SK-N-SH (cell line): ENCODE measurements at regions of chr7 and their contacts with region 1.

Region 1: DNA sequence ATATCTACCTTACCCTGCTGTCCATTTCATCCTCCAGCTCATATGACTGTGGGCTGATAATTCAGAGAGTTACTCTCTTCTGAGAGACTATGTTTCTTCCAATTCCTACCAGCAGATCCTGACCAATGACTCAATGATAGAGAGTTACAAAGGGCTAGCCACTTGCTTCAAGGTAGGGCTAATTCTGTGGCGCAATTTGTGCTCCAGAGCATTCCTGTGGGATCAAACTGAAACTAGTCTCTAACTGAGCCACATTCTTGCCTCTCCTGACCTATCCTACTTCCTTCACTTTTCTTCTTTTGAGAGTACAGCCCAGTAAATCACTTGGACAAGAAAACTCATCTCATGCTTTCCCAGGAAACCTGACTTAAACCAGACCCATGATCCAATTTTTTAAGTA is 17.9 kb upstream of the ASZ1 start:
- DNase-seq: no peak
- H3K4me3 ChIP-seq: no peak overlapping the region
- H3K27ac ChIP-seq: no peak overlapping the region
- H3K4me1 ChIP-seq: no peaks in the 10 kb centered on the region
- H3K27me3 ChIP-seq: no peaks in the 10 kb centered on the region
- CTCF ChIP-seq: no peak
- EP300 ChIP-seq: no peak
- RAD21 ChIP-seq: no peak

Region 2: DNA sequence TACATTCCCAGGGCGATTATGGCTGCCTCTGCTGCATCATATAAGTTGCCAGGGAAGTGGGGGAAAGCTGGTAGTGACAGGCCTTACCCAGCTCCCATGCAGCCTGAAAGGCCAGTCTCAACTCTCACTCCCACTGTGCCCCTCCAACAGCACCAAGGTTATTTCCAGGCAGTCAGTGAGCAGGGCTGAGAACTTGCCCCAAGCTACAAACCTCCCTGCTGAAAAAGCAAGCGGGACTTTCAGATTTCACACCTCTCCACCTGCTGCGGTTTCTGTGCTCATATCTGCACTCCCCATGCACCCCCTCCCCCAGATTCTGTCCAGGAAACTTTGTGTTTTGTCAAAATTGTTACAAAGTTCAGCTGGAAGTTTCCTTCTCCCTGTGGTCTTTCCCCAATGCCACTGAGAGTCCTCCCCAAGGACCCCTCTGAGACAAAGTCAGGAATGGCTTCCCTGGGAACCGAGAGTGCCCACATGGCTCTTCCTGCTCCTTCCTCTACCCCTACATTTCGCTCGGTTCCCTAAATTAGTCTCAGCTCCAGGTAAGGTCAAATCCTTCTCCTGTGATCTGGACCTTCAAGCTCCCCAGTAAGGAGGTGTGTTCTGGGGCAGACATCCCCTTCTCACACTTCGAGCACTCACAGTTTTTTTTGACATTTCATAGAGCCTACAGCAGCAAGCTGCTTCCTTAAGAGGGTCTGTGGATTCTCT is 97.1 kb before region 1 on chr7:
- CTCF ChIA-PET with region 1: no interaction called
- POLR2A ChIA-PET with region 1: no interaction called
- DNase-seq: no peak
- H3K4me3 ChIP-seq: no peak overlapping the region
- H3K27ac ChIP-seq: no peak overlapping the region
- H3K4me1 ChIP-seq: no peaks in the 10 kb centered on the region
- H3K27me3 ChIP-seq: peaks cover 18% of the 10 kb centered on the region
- CTCF ChIP-seq: no peak
- EP300 ChIP-seq: no peak
- RAD21 ChIP-seq: no peak

Region 3: DNA sequence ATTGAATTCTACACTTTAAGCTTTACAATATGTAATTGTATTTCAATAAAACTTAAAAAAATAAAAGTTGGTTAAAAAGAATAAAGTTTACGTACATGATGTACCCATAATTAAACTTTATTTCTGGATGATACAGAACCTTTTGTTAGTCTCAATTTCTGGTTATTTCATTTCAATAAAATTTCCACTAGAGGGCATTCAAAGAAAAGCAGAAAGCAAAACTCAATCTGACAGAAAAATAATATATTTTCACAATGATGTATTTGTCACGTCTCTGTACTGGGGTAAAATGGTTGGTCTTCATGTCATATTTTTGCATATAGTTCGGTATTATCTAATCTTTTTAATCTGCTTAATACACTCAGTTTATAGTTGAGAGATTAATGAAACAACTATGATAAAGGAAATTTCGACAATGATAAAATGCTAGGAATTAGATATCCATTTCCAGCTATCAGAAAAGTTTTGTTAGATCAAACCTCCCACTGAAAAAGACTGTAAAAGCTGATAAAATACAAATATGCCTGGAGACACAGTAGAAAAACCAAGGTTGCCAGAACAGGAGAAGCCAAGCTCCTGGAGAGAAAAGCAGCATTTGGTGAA is 45.3 kb before region 1 on chr7:
- CTCF ChIA-PET with region 1: interaction called, 11 read pairs
- POLR2A ChIA-PET with region 1: no interaction called
- DNase-seq: no peak
- H3K4me3 ChIP-seq: no peak overlapping the region
- H3K27ac ChIP-seq: no peak overlapping the region
- H3K4me1 ChIP-seq: no peaks in the 10 kb centered on the region
- H3K27me3 ChIP-seq: peaks cover 30% of the 10 kb centered on the region
- CTCF ChIP-seq: peak; percentile 78
- EP300 ChIP-seq: no peak
- RAD21 ChIP-seq: peak; percentile 56

Region 4: DNA sequence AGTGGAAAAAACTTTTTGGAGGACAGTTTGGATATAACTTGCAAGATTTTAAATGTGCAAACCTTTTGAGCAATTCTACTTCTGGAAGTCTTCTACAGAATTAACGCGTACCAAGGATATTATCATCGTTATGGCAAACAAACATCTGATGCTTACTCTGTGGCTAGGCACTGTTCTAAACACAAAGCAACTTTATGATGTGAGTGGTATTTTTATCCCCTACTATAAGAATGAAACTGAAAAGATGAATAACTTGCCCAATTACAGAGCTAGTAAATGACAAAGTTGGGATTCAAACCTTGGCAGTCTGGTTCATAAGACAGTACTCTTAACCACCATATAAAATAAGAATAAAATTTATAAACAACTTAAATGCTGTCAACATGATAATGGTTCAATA is 33.7 kb before region 1 on chr7:
- CTCF ChIA-PET with region 1: no interaction called
- POLR2A ChIA-PET with region 1: no interaction called
- DNase-seq: no peak
- H3K4me3 ChIP-seq: no peak overlapping the region
- H3K27ac ChIP-seq: no peak overlapping the region
- H3K4me1 ChIP-seq: no peaks in the 10 kb centered on the region
- H3K27me3 ChIP-seq: no peaks in the 10 kb centered on the region
- CTCF ChIP-seq: no peak
- EP300 ChIP-seq: no peak
- RAD21 ChIP-seq: no peak